CD8-positive, alpha-beta T cell (primary cell): ENCODE measurements at regions of chr6 and their contacts with region 1.

Region 1: DNA sequence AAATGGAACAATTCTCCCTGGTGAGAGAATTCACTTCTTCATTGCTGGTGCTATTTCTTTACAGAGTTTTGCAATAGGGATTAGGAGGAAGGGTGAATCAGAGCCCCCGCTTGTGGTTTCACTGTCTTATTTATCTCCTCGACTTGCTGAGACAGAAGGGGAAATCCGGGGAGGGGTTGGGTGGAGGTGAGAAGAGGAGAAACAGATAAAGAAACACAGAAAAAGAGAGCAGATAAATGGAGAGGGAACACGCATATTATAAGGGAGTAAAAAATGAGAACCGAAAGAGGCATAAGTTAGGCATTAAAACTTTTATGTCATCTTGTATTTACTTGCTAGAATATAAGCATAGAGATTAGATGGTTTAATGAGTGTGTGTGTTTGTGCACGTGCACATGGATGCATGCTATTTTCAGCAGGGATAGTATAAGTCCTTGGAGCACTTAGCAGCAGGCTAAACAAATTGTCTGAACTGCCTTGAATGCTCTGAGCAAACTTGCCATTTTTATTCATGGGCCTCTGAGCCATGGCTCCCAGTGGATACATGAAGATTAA is 105.0 kb downstream of the OLIG3 start:
- DNase-seq: peak; percentile 12 to 91 (median 75)
- ATAC-seq: peak; percentile 96
- H3K4me3 ChIP-seq: no peak overlapping the region
- H3K4me3 Mint-ChIP-seq: peak overlapping the region; percentile 67
- H3K27ac ChIP-seq: peak overlapping the region; percentile 4 to 79
- H3K27ac Mint-ChIP-seq: peak overlapping the region; percentile 84
- H3K4me1 ChIP-seq: peaks cover 35% of the 10 kb centered on the region
- H3K4me1 Mint-ChIP-seq: peaks cover 74% of the 10 kb centered on the region
- H3K27me3 ChIP-seq: no peaks in the 10 kb centered on the region
- H3K27me3 Mint-ChIP-seq: no peaks in the 10 kb centered on the region
- CTCF ChIP-seq: no peak

Region 2: DNA sequence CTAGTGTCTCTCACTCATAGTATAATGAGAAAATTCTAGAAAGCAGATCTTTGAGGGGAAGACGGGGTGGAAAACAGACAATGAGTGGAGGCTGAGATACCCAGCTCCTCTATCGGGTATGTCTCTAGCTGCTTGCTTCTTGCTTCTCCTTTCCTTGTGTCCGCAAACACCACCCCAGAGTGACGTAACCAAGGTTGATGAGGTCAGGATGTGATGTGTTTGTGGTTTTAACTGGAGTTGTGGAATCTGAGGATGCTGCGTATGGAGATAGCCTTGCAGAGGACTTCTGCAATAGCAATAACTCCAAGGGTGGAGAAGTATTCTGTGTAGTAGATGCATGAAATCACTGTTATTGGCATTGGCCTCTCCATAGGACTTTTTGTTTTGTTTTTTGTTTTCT is 37.3 kb before region 1 on chr6:
- CTCF ChIA-PET with region 1: no interaction called
- POLR2A ChIA-PET with region 1: no interaction called
- intact Hi-C with region 1: loop called in 1 of 2 experiments (anchors 5 kb)
- DNase-seq: peak in 1 of 9 experiments; percentile 34
- ATAC-seq: no peak
- H3K4me3 ChIP-seq: no peak overlapping the region
- H3K4me3 Mint-ChIP-seq: no peak overlapping the region
- H3K27ac ChIP-seq: no peak overlapping the region
- H3K27ac Mint-ChIP-seq: no peak overlapping the region
- H3K4me1 ChIP-seq: peaks cover 15% of the 10 kb centered on the region
- H3K4me1 Mint-ChIP-seq: peaks cover 21% of the 10 kb centered on the region
- H3K27me3 ChIP-seq: no peaks in the 10 kb centered on the region
- H3K27me3 Mint-ChIP-seq: peaks cover 2% of the 10 kb centered on the region
- CTCF ChIP-seq: no peak

Region 3: GRCh38 chr6:137363805-137364138 is 25.5 kb before region 1 on chr6:
- CTCF ChIA-PET with region 1: interaction called, 3 read pairs
- POLR2A ChIA-PET with region 1: no interaction called
- intact Hi-C with region 1: loop called in 1 of 2 experiments (anchors 2 kb)
- DNase-seq: peak in 2 of 9 experiments; percentile 50 to 68
- ATAC-seq: peak; percentile 49
- H3K4me3 ChIP-seq: no peak overlapping the region
- H3K4me3 Mint-ChIP-seq: no peak overlapping the region
- H3K27ac ChIP-seq: peak overlapping the region in 1 of 2 experiments; percentile 9
- H3K27ac Mint-ChIP-seq: no peak overlapping the region
- H3K4me1 ChIP-seq: peaks cover 15% of the 10 kb centered on the region
- H3K4me1 Mint-ChIP-seq: peaks cover 26% of the 10 kb centered on the region
- H3K27me3 ChIP-seq: no peaks in the 10 kb centered on the region
- H3K27me3 Mint-ChIP-seq: no peaks in the 10 kb centered on the region
- CTCF ChIP-seq: no peak

Region 4: GRCh38 chr6:137371634-137372016 is 17.6 kb before region 1 on chr6:
- CTCF ChIA-PET with region 1: interaction called, 4 read pairs
- POLR2A ChIA-PET with region 1: interaction called, 3 read pairs
- intact Hi-C with region 1: loop called in 1 of 2 experiments (anchors 2 kb)
- DNase-seq: no peak
- ATAC-seq: no peak
- H3K4me3 ChIP-seq: no peak overlapping the region
- H3K4me3 Mint-ChIP-seq: no peak overlapping the region
- H3K27ac ChIP-seq: no peak overlapping the region
- H3K27ac Mint-ChIP-seq: no peak overlapping the region
- H3K4me1 ChIP-seq: no peaks in the 10 kb centered on the region
- H3K4me1 Mint-ChIP-seq: peaks cover 11% of the 10 kb centered on the region
- H3K27me3 ChIP-seq: no peaks in the 10 kb centered on the region
- H3K27me3 Mint-ChIP-seq: no peaks in the 10 kb centered on the region
- CTCF ChIP-seq: no peak

Region 5: GRCh38 chr6:137497721-137498463 is 108.7 kb after region 1 on chr6:
- CTCF ChIA-PET with region 1: no interaction called
- POLR2A ChIA-PET with region 1: no interaction called
- intact Hi-C with region 1: no loop called
- DNase-seq: peak in 4 of 9 experiments; percentile 16 to 60 (median 33)
- ATAC-seq: peak; percentile 59
- H3K4me3 ChIP-seq: peak overlapping the region in 1 of 2 experiments; percentile 40
- H3K4me3 Mint-ChIP-seq: peak overlapping the region; percentile 56
- H3K27ac ChIP-seq: no peak overlapping the region
- H3K27ac Mint-ChIP-seq: no peak overlapping the region
- H3K4me1 ChIP-seq: peaks cover 51% of the 10 kb centered on the region
- H3K4me1 Mint-ChIP-seq: peaks cover 42% of the 10 kb centered on the region
- H3K27me3 ChIP-seq: peaks cover 53 to 72% of the 10 kb centered on the region in 2 experiments
- H3K27me3 Mint-ChIP-seq: peaks cover 65% of the 10 kb centered on the region
- CTCF ChIP-seq: no peak